ENCODE measurements at regions of chr20 and their contacts with region 1.

Region 1: GRCh38 chr20:47272893-47273590 is 83.5 kb downstream of the ZMYND8 start:
- DNase-seq: peak in 1 of 2 donors; percentile 77
- H3K4me3 ChIP-seq: no peak overlapping the region
- H3K27ac ChIP-seq: peak overlapping the region; percentile 95 to 97
- H3K4me1 ChIP-seq: peaks cover 15 to 62% of the 10 kb centered on the region in 2 donors
- H3K27me3 ChIP-seq: no peaks in the 10 kb centered on the region
- CTCF ChIP-seq: peak; percentile 79 to 94 (median 89)

Region 2: GRCh38 chr20:47317127-47317895 is 44.3 kb after region 1 on chr20:
- intact Hi-C with region 1: loop called (anchors 1 kb)
- DNase-seq: peak; percentile 68 to 96
- H3K4me3 ChIP-seq: peak overlapping the region in 1 of 2 donors; percentile 15
- H3K27ac ChIP-seq: peak overlapping the region; percentile 97 to 99
- H3K4me1 ChIP-seq: peaks cover 31 to 52% of the 10 kb centered on the region in 2 donors
- H3K27me3 ChIP-seq: no peaks in the 10 kb centered on the region
- CTCF ChIP-seq: no peak

Region 3: GRCh38 chr20:47352332-47353238 is 79.5 kb after region 1 on chr20:
- intact Hi-C with region 1: no loop called
- DNase-seq: no peak
- H3K4me3 ChIP-seq: peak overlapping the region; percentile 23 to 26
- H3K27ac ChIP-seq: peak overlapping the region; percentile 95 to 99
- H3K4me1 ChIP-seq: peaks cover 28 to 93% of the 10 kb centered on the region in 2 donors
- H3K27me3 ChIP-seq: no peaks in the 10 kb centered on the region
- CTCF ChIP-seq: no peak

Region 4: DNA sequence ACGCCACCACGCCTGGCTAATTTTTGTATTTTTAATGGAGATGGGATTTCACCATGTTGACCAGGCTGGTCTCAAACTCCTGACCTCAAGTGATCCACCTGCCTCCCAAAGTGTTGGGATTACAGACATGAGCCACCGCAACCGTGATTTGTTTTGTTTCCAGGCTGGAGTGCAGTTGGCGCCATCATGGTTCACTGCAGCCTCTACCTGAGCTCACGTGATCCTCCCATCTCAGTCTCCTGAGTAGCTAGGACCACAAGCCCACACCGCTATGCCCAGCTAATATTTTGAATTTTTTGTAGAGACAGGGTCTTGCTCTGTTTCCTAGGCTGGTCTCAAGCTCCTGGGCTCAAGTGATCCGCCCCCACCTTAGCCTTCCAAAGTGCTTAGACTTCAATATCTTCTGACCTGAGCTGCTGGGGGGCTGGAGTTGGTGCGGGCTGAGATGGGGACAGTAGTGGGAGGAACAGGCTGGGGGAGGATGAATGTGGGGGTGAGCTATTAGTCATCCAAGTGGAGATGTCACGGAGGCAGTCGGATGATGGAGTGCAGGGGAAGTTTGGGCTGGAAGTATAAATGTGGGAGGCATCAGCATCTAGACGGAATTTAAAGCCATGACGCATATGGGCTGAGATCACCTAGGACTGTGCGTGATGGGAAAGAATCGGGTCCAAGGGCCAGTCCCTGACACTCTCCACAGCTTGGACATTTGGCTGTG is 106.5 kb after region 1 on chr20:
- intact Hi-C with region 1: loop called (anchors 1 kb)
- DNase-seq: no peak
- H3K4me3 ChIP-seq: no peak overlapping the region
- H3K27ac ChIP-seq: no peak overlapping the region
- H3K4me1 ChIP-seq: peaks cover under 1 to 10% of the 10 kb centered on the region in 2 donors
- H3K27me3 ChIP-seq: no peaks in the 10 kb centered on the region
- CTCF ChIP-seq: no peak

Region 5: DNA sequence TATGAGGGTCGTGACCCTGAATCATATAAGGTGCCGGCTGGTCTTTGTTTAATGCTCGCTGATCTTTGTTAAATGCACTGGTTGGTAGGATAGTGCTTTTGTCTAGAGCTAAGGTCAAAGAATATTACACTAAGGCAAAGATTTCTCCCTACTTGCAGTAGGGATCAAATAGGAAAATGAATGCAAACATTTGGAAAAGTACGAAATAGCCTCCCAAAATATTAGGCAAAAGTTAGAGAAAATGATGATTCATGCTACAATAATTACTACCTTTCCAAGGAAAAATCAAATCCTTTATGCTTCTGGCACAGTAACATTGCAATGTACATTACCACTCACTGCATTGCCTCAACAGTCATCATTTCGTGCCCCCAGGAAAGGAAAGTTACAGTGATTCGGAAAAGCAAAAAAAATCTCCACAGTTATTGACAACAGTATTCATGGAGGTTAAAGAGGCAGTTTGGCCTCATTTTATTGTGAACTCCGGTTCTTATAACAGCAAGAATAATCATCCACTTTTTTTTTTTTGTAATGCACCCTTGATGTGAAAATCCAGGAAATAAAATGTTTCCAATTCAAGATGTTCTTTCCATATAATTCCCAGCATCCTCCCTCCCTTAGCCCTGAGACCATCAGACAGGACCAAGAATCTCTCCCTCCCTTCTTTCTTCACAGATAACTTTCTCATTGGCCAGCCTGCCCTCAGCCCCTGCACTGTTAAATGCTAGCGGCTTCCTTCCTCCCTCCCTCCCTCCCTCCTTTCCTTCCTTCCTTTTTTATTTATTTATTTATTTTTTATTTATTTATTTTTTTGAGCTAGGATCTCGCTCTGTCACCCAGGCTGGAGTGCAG is 145.2 kb after region 1 on chr20:
- intact Hi-C with region 1: no loop called
- DNase-seq: no peak
- H3K4me3 ChIP-seq: no peak overlapping the region
- H3K27ac ChIP-seq: no peak overlapping the region
- H3K4me1 ChIP-seq: no peaks in the 10 kb centered on the region
- H3K27me3 ChIP-seq: no peaks in the 10 kb centered on the region
- CTCF ChIP-seq: no peak

Region 6: GRCh38 chr20:47501483-47502270 is 228.6 kb after region 1 on chr20 and contains the start of gene NCOA3:
- intact Hi-C with region 1: loop called (anchors 5 kb)
- DNase-seq: peak; percentile 65 to 96
- H3K4me3 ChIP-seq: peak within 1 kb of the TSS; percentile 76 to 98
- H3K27ac ChIP-seq: peak within 1 kb of the TSS; percentile 91 to 98
- H3K4me1 ChIP-seq: peaks cover 0 to 12% of the 10 kb centered on the region in 2 donors
- H3K27me3 ChIP-seq: no peaks in the 10 kb centered on the region
- CTCF ChIP-seq: peak; percentile 59 to 68 (median 60)
- total RNA-seq, gene NCOA3: 26.3 TPM